ENCODE measurements at regions of chr2 and their contacts with region 1.

Region 1: DNA sequence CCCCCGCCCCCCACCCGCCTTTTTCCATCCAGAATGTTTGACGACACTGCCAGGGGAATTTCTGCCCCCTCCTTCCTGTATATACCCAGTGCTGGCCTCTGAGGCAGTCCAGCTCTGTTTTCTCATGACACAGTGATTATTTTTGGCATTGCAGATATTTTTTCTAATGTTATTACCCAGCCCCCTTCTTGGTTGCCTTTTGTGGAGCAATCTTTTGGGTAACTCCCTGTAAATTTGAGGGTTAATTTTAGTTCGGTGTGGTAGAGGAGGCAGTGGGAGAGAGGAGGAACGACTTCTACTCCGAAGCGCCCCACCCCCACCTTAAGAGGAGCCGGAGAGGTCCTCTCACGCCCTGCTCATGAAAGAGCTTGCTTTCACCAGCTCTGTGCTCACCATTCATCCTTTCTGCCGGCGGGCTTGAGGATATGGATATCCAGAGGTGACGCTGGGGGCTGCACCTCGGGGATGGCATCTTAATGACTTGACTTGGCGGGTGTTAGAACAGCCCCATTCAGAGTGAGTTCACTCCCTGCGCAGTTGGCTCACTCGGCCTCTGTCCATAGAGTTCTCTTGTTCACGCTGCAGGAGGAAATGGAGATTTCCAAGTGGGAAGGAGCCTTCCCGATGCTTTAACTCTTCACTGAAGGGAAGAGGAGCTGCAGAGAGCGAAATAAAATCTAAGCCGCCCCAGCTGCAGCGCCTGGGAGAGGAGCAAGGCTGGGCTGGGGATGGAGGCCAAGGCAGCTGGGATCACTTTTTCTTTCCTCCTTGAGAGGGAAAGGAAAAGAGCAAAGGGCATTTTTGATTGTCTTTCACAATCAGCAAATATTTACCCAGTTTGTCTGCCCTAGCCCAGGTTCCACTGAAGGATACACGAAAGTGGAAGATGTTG is 38.4 kb downstream of the EPAS1 start:
- DNase-seq: no peak
- ATAC-seq: no peak
- H3K4me3 ChIP-seq: no peak overlapping the region
- H3K4me3 Mint-ChIP-seq: no peak overlapping the region
- H3K27ac ChIP-seq: no peak overlapping the region
- H3K27ac Mint-ChIP-seq: no peak overlapping the region
- H3K4me1 ChIP-seq: peaks cover 13% of the 10 kb centered on the region
- H3K4me1 Mint-ChIP-seq: peaks cover 27% of the 10 kb centered on the region
- H3K27me3 ChIP-seq: no peaks in the 10 kb centered on the region
- H3K27me3 Mint-ChIP-seq: no peaks in the 10 kb centered on the region
- CTCF ChIP-seq: no peak

Region 2: GRCh38 chr2:46351750-46352138 is 16.1 kb after region 1 on chr2:
- CTCF ChIA-PET with region 1: no interaction called
- POLR2A ChIA-PET with region 1: interaction called, 15 read pairs
- intact Hi-C with region 1: no loop called
- DNase-seq: peak; percentile 40 to 90 (median 66)
- ATAC-seq: peak; percentile 87
- H3K4me3 ChIP-seq: peak overlapping the region; percentile 40
- H3K4me3 Mint-ChIP-seq: peak overlapping the region; percentile 80
- H3K27ac ChIP-seq: peak overlapping the region in 1 of 2 donors; percentile 63
- H3K27ac Mint-ChIP-seq: peak overlapping the region; percentile 90
- H3K4me1 ChIP-seq: peaks cover 74% of the 10 kb centered on the region
- H3K4me1 Mint-ChIP-seq: peaks cover 94% of the 10 kb centered on the region
- H3K27me3 ChIP-seq: no peaks in the 10 kb centered on the region
- H3K27me3 Mint-ChIP-seq: no peaks in the 10 kb centered on the region
- CTCF ChIP-seq: no peak

Region 3: GRCh38 chr2:46793423-46794416 is 458.1 kb after region 1 on chr2:
- CTCF ChIA-PET with region 1: no interaction called
- POLR2A ChIA-PET with region 1: no interaction called
- intact Hi-C with region 1: no loop called
- DNase-seq: no peak
- ATAC-seq: no peak
- H3K4me3 ChIP-seq: no peak overlapping the region
- H3K4me3 Mint-ChIP-seq: no peak overlapping the region
- H3K27ac ChIP-seq: no peak overlapping the region
- H3K27ac Mint-ChIP-seq: no peak overlapping the region
- H3K4me1 ChIP-seq: no peaks in the 10 kb centered on the region
- H3K4me1 Mint-ChIP-seq: no peaks in the 10 kb centered on the region
- H3K27me3 ChIP-seq: peaks cover 0 to 2% of the 10 kb centered on the region in 2 experiments
- H3K27me3 Mint-ChIP-seq: no peaks in the 10 kb centered on the region
- CTCF ChIP-seq: no peak

Measured in CD4-positive, alpha-beta T cell (primary cell).